ENCODE measurements at regions of chr19 and their contacts with region 1.

Region 1: DNA sequence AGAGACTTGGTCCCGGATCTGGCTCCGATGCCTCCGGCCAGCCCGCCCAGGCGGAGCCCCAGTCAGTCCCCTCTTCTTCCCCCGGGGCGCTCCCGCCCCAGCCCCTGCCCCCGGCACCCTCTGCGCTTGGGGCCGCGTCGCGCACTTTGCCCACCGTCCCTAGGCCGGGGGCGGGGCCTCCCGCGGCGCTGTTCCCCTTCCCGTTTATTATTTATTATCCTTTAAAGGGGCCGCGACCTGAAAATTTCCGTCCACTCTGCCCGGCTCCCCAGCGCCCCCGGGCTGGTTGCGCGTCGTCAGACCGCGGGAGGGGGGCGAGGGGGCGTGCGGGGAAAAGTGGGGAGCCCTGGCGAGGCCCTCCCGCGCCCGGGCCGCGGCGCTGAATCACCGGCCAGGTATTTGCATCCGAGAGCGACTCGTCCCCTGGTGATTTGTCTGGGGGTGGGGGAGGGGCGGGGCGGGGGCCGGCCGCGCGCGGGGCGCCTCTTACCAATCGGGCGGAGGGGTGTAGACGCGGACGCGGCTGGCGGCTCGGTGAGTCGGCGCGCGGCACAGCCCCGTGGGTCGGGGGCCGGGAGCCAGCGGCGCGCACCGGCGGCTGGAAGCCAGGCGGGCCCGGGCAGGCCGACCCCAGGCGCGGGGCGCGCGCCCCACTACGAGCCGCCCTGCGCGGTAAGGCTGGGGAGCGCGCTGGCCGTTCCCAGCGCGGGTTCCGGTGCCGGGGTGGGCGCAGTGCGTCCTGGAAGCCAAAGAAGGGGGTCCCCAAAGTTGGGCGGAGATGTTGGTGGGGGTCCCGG is at the start of gene ARID3A:
- DNase-seq: peak; percentile 80
- H3K4me3 ChIP-seq: peak within 1 kb of the TSS; percentile 91
- H3K27ac ChIP-seq: peak within 1 kb of the TSS; percentile 88
- H3K4me1 ChIP-seq: peaks cover 56% of the 10 kb centered on the region
- H3K27me3 ChIP-seq: peaks cover 8% of the 10 kb centered on the region
- CTCF ChIP-seq: no peak
- total RNA-seq, gene ARID3A: 4.8 TPM

Region 2: GRCh38 chr19:768424-768823 is 157.3 kb before region 1 on chr19:
- intact Hi-C with region 1: loop called (anchors 10 kb)
- DNase-seq: no peak
- H3K4me3 ChIP-seq: no peak overlapping the region
- H3K27ac ChIP-seq: no peak overlapping the region
- H3K4me1 ChIP-seq: peaks cover 10% of the 10 kb centered on the region
- H3K27me3 ChIP-seq: peaks cover 37% of the 10 kb centered on the region
- CTCF ChIP-seq: no peak

Region 3: DNA sequence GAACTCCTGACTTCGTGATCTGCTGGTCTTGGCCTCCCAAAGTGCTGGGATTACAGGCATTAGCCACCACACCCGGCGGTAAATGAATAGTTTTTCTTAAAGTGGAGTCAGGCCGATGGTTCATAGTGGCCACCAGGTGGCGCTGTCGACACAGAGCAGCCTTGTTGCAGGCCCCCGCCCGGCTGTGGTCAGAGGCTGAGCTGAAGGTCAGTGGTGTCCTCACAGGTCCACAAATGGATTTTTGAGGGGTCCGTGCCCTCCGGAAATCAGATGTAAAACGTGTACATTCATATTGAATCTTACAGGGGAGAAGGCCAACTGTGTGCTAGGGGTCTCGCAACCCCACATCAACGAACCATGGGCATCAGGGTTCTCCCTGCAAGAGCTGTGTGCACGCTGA is 45.0 kb after region 1 on chr19:
- intact Hi-C with region 1: no loop called
- DNase-seq: no peak
- H3K4me3 ChIP-seq: no peak overlapping the region
- H3K27ac ChIP-seq: no peak overlapping the region
- H3K4me1 ChIP-seq: no peaks in the 10 kb centered on the region
- H3K27me3 ChIP-seq: no peaks in the 10 kb centered on the region
- CTCF ChIP-seq: peak; percentile 46

Region 4: GRCh38 chr19:982567-983170 is 56.9 kb after region 1 on chr19:
- intact Hi-C with region 1: loop called (anchors 2 kb)
- DNase-seq: peak; percentile 74
- H3K4me3 ChIP-seq: peak overlapping the region; percentile 60
- H3K27ac ChIP-seq: peak overlapping the region; percentile 89
- H3K4me1 ChIP-seq: peaks cover 35% of the 10 kb centered on the region
- H3K27me3 ChIP-seq: peaks cover 8% of the 10 kb centered on the region
- CTCF ChIP-seq: peak; percentile 96

Measured in left ventricle myocardium inferior (tissue), 1 donor.